ENCODE measurements at regions of chr2 and their contacts with region 1.

Region 1: DNA sequence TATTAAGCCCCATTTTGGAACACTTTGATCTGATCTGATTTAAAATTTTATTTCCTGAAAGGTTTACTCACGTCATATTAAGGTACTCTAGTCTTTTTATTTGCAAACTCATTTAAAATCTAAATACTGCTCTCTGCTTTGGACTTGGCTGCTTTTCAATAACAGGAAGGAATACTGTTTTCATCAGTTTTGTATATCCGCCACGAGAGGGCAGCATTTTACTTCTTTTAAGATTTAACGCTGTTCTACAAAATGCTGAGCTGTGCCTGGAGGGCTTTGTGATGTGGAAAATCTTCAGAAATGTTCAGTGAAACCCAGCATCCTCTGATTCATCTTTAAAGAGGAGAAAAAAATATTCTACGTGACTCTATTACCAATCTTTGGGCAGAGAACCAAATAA is 37.5 kb upstream of the SLC38A11 start:
- DNase-seq: peak; percentile 87
- H3K4me3 Mint-ChIP-seq: no peak overlapping the region
- H3K27ac Mint-ChIP-seq: peak overlapping the region; percentile 31
- H3K4me1 Mint-ChIP-seq: peaks cover 22% of the 10 kb centered on the region
- H3K27me3 Mint-ChIP-seq: no peaks in the 10 kb centered on the region
- CTCF ChIP-seq: peak; percentile 30

Region 2: GRCh38 chr2:164826293-164827243 is 166.2 kb before region 1 on chr2:
- CTCF ChIA-PET with region 1: no interaction called
- POLR2A ChIA-PET with region 1: no interaction called
- intact Hi-C with region 1: no loop called
- DNase-seq: peak; percentile 64
- H3K4me3 Mint-ChIP-seq: peak overlapping the region; percentile 22
- H3K27ac Mint-ChIP-seq: peak overlapping the region; percentile 90
- H3K4me1 Mint-ChIP-seq: peaks cover 14% of the 10 kb centered on the region
- H3K27me3 Mint-ChIP-seq: no peaks in the 10 kb centered on the region
- CTCF ChIP-seq: no peak

Region 3: DNA sequence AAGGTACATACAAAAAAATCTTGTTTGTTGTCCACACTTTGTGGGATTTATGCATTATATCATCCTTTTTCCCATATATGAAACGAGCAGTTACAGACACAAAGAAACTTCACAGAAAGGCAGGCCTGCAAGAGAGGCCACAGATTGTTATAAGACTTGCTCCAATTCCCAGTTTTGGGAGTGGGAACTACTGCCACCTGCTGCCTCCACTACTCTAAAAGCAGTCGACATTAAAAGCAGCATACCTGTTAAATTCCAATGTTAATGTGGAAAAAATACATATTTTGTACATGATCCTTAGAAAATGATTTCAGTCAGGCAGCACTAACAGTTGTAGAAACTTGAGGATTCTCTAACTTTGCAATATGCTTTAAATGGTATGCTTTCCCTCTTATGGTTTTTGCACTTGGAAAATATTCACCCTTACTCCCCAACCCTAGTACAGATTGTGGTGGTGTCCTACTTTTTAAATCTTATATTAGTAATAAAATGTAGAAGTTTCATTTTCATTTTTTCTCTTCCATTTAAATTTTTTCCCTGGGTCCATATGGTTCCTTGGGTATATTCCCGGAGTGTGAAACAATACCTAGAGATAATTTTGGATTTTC is 75.4 kb before region 1 on chr2:
- CTCF ChIA-PET with region 1: interaction called, 7 read pairs
- POLR2A ChIA-PET with region 1: interaction called, 10 read pairs
- intact Hi-C with region 1: no loop called
- DNase-seq: peak; percentile 65
- H3K4me3 Mint-ChIP-seq: no peak overlapping the region
- H3K27ac Mint-ChIP-seq: no peak overlapping the region
- H3K4me1 Mint-ChIP-seq: peaks cover 8% of the 10 kb centered on the region
- H3K27me3 Mint-ChIP-seq: no peaks in the 10 kb centered on the region
- CTCF ChIP-seq: peak; percentile 58

Region 4: DNA sequence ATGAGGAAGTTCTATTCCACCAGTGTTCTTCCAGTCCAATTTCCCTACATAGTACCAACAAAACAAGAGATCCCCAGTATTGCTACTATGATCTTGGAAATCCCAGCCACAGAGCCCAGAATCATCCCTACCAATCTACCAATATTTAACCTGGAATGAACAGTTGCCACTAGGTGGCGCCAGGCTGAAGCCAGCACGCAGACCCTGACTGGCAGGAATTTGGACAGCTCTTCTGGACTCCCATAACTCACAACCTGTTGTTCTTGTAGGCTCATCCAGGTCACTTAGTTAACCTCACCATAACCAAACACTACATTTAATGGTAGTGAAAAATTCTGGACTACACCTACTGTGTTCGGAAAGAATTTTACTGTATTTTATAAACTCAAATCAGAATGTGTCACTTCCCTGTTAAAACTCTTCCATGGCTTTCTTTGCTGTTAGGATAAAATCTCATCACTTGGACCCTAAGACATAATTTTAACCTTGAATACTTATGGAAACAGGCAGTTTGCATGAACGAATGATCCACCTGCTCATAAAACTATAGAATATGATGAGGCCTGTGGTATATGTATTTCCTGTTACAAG is 22.3 kb after region 1 on chr2:
- CTCF ChIA-PET with region 1: interaction called, 23 read pairs
- POLR2A ChIA-PET with region 1: interaction called, 3 read pairs
- intact Hi-C with region 1: no loop called
- DNase-seq: peak; percentile 73
- H3K4me3 Mint-ChIP-seq: no peak overlapping the region
- H3K27ac Mint-ChIP-seq: no peak overlapping the region
- H3K4me1 Mint-ChIP-seq: peaks cover 5% of the 10 kb centered on the region
- H3K27me3 Mint-ChIP-seq: peaks cover 23% of the 10 kb centered on the region
- CTCF ChIP-seq: peak; percentile 61

Region 5: DNA sequence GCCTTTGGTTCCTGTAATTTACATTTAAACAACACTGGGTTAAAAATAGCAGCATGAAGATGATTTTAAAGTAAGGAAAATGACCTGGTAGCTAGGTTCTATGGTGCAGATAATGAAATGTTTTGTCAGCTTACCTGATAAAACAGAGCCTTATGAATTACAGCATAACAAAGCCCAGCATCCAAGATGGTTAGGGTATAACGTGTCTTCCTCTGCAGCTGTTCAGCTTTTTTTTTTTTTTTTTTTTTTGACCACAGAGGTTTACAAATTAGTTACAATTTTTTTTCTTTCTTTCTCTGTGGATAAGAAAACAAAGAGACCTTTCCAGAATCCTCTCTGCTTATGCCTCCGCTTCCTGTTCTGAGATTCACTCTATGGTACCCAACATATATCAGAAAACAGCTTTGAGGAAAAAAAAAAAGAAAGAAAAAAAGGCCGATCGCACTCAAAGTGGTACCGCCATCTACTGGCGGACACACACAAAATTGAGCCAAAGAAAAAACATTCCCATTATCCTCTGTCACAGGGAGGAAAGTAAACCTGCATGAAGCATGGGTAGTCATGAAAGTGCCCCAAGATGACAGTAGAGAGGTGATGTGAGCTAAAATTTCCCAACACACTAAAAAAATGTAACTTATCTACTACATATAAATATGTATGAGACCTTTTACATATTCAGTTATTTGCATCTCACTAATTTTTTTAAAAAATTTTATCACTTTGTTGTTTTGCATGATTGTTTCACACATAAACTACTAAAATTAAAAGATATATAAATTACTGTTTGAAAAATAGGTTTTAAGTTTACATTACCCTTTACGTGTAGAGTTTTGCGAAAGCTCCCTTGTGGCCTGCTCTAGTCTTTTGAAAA is 211.1 kb after region 1 on chr2 and contains the start of gene SCN3A:
- CTCF ChIA-PET with region 1: interaction called, 52 read pairs
- POLR2A ChIA-PET with region 1: interaction called, 3 read pairs
- intact Hi-C with region 1: loop called (anchors 1 kb)
- DNase-seq: peak; percentile 58
- H3K4me3 Mint-ChIP-seq: no peak within 1 kb of the TSS
- H3K27ac Mint-ChIP-seq: no peak within 1 kb of the TSS
- H3K4me1 Mint-ChIP-seq: no peaks in the 10 kb centered on the region
- H3K27me3 Mint-ChIP-seq: peaks cover 72% of the 10 kb centered on the region
- CTCF ChIP-seq: peak; percentile 70
- total RNA-seq, gene SCN3A: not detected in 2 replicates

Region 6: DNA sequence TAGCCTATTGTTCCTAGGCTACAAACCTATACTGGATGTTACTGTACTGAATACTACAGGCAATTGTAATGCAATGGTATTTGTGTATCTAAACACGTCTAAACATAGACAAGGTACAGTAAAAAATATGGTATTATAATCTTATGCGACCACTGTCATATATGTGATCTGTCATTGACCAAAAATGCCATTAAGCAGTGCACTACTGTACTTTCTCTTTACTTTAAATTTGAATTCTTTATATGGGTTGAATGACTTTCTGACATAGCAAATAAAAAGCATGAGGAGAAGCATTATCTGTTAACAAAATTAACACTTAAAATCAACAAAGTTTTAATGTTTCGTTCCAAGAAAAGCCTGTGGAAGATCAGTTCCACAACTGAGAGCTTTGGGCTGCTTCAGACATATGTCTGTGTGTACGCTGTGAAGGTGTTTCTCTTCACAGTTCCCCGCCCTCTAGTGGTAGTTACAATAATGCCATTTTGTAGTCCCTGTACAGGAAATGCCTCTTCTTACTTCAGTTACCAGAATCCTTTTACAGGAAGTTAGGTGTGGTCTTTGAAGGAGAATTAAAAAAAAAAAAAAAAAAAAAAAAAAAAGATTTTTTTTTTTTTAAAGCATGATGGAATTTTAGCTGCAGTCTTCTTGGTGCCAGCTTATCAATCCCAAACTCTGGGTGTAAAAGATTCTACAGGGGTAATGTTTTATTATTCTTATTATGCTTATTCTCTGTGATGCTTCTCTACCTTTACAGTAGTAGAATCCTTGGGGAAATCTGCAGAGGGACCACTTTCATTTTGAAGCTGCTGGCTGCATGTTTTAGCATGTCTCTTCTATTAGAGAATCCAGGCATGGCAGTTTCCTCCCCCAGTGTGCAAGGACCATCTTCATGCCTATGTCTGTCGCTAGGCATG is 300.9 kb after region 1 on chr2:
- CTCF ChIA-PET with region 1: interaction called, 12 read pairs
- POLR2A ChIA-PET with region 1: no interaction called
- intact Hi-C with region 1: loop called (anchors 2 kb)
- DNase-seq: peak; percentile 80
- H3K4me3 Mint-ChIP-seq: no peak overlapping the region
- H3K27ac Mint-ChIP-seq: no peak overlapping the region
- H3K4me1 Mint-ChIP-seq: no peaks in the 10 kb centered on the region
- H3K27me3 Mint-ChIP-seq: peaks cover 47% of the 10 kb centered on the region
- CTCF ChIP-seq: peak; percentile 49